Activated CD4-positive, alpha-beta memory T cell treated with anti-CD3 and anti-CD28 coated beads, Interleukin-2, amount 10 ng/mL, durations not matched to agents 7 days and 5 days (primary cell): ENCODE measurements at regions of chr6 and their contacts with region 1.

Region 1: GRCh38 chr6:16761471-16762267 is 409 bp upstream of the ATXN1 start:
- DNase-seq: peak; percentile 89
- H3K4me3 Mint-ChIP-seq: peak overlapping the region; percentile 83
- H3K27ac Mint-ChIP-seq: peak overlapping the region; percentile 96
- H3K4me1 Mint-ChIP-seq: peaks cover 58% of the 10 kb centered on the region
- H3K27me3 Mint-ChIP-seq: no peaks in the 10 kb centered on the region

Region 2: DNA sequence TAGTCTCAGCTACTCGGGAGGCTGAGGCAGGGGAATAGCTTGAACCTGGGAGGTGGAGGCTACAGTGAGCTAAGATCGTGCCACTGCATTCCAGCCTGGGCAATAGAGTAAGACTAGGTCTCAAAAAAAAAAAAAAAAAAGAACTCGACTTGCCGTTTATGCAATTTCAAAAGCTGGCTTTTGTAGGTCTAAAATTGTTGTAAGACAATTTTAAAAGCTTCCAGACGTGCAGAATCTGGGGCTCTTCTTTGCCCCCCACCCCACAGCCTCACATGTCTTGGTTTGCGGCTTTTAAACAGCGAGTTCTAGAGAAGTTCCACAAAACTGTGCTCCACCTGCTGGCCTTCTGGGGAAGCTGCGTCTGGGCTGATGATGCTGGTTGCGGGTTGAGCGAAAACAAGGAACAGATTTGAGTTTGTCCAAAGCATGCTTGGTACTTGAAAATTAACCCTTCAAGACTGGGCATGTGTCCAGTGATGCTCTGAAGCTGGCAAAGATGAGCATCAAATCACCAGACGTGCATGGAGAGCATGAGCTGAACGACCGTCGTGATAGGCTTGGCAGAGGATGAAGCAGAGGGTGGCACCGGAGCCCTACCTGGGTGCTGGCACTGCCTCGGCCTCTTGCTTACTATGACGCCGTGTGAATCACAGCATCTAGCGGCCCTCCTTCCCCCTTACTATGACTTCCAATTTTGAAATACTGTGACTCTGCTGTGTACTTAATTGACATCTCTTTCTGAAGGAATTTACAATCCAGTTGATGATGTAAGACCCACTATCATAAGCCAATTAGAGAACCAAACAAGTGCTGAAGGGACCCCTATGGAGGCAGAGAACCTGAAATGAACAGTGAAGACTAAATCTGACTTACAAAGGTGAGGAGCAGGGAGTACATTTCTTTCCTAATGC is 351.9 kb before region 1 on chr6:
- CTCF ChIA-PET with region 1: interaction called, 33 read pairs
- POLR2A ChIA-PET with region 1: interaction called, 35 read pairs
- DNase-seq: peak; percentile 73
- H3K4me3 Mint-ChIP-seq: peak overlapping the region; percentile 63
- H3K27ac Mint-ChIP-seq: peak overlapping the region; percentile 73
- H3K4me1 Mint-ChIP-seq: peaks cover 65% of the 10 kb centered on the region
- H3K27me3 Mint-ChIP-seq: no peaks in the 10 kb centered on the region

Region 3: DNA sequence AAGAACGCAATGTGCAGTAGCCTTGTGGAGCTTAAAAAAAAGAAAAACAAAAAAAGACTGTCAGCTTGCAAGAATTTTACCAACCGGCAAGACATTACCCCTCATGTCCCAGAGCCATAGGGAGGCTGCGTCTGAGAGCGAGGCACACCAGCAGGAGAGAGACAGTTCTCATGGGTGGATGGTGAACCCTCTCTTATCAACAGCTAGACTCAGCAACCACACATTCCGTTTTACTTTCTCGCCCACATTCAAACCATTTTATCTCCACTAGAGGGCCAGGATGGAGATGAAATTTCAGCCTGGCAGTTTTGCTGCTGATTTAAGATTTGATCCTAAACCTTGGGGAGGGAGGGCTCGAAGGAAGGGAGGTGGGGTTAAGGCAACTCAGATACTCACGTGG is 247.4 kb before region 1 on chr6:
- CTCF ChIA-PET with region 1: interaction called, 86 read pairs
- POLR2A ChIA-PET with region 1: interaction called, 45 read pairs
- DNase-seq: peak; percentile 41
- H3K4me3 Mint-ChIP-seq: no peak overlapping the region
- H3K27ac Mint-ChIP-seq: peak overlapping the region; percentile 24
- H3K4me1 Mint-ChIP-seq: peaks cover 78% of the 10 kb centered on the region
- H3K27me3 Mint-ChIP-seq: no peaks in the 10 kb centered on the region

Region 4: GRCh38 chr6:16683524-16684194 is 78.0 kb before region 1 on chr6:
- CTCF ChIA-PET with region 1: no interaction called
- POLR2A ChIA-PET with region 1: interaction called, 11 read pairs
- DNase-seq: no peak
- H3K4me3 Mint-ChIP-seq: no peak overlapping the region
- H3K27ac Mint-ChIP-seq: peak overlapping the region; percentile 11
- H3K4me1 Mint-ChIP-seq: peaks cover 57% of the 10 kb centered on the region
- H3K27me3 Mint-ChIP-seq: no peaks in the 10 kb centered on the region

Region 5: GRCh38 chr6:16731478-16732051 is 30.1 kb before region 1 on chr6:
- CTCF ChIA-PET with region 1: interaction called, 47 read pairs
- POLR2A ChIA-PET with region 1: interaction called, 64 read pairs
- DNase-seq: peak; percentile 63
- H3K4me3 Mint-ChIP-seq: peak overlapping the region; percentile 61
- H3K27ac Mint-ChIP-seq: peak overlapping the region; percentile 86
- H3K4me1 Mint-ChIP-seq: peaks cover 75% of the 10 kb centered on the region
- H3K27me3 Mint-ChIP-seq: no peaks in the 10 kb centered on the region

Region 6: DNA sequence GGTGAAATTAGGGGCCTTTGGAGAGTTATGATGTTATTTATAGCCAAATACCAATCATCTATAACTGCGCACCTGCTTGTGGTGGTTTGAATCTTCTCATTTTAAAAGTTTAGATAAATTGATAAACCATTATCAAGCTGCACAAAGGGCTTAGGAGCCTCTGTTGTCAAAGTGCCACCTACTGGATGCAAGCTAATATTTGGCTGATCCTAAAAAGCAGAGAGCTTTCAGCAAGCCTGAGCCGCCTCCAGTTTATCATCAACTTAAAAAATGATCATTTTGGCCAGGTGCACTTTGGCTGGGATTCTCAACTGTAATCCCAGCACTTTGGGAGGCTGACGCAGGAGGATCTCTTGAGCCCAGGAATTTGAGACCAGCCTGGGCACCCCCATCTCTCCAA is 58.1 kb after region 1 on chr6:
- CTCF ChIA-PET with region 1: no interaction called
- POLR2A ChIA-PET with region 1: no interaction called
- DNase-seq: no peak
- H3K4me3 Mint-ChIP-seq: no peak overlapping the region
- H3K27ac Mint-ChIP-seq: no peak overlapping the region
- H3K4me1 Mint-ChIP-seq: no peaks in the 10 kb centered on the region
- H3K27me3 Mint-ChIP-seq: peaks cover 26% of the 10 kb centered on the region

Region 7: DNA sequence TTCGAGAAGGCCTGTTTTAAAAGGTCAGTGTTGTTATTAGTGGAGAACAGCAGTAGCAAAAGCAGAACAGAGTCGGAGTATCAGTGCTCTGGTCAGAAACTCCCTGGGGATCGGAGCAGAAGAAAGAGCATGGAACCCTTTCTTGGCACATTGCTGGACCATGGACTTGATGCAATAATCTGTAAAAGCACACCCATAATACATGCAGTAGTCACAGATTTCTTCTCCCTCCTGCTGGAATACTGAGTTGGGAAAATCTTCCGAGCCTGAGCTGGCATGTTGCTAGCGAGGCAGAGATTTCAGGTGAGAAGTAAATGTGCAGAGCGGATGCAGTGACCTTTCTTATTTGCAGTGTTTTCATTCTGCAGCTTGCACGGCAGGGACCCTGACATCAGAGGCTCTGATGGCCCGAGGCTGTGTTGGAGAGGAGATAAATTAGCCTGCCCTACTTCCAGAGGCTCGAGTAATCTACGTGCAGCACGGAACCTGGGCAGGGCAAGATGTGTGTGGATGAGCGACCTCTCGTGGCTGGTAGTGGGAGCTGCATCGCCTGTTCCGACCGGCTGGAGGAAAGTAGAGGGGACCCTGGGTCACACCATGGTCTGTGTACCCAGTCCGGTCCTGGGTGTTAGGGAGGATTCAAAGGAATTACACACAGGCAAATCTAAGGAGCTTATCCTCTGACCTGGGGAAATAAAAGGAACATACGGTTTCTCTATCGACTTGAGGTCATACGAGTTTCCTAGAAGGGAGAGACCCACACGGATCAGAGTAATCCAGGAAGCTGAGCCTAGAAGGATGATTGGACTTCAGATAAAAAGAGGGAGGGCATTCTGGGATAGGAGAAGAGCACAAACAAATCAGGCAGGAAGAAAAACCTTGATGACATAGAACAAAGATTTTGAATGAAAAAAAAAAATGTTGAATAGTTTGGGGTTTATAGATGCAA is 203.2 kb after region 1 on chr6:
- CTCF ChIA-PET with region 1: interaction called, 17 read pairs
- POLR2A ChIA-PET with region 1: interaction called, 10 read pairs
- DNase-seq: peak; percentile 72
- H3K4me3 Mint-ChIP-seq: no peak overlapping the region
- H3K27ac Mint-ChIP-seq: no peak overlapping the region
- H3K4me1 Mint-ChIP-seq: peaks cover 3% of the 10 kb centered on the region
- H3K27me3 Mint-ChIP-seq: peaks cover 25% of the 10 kb centered on the region